BJ (cell line): ENCODE measurements at regions of chr16 and their contacts with region 1.

Region 1: DNA sequence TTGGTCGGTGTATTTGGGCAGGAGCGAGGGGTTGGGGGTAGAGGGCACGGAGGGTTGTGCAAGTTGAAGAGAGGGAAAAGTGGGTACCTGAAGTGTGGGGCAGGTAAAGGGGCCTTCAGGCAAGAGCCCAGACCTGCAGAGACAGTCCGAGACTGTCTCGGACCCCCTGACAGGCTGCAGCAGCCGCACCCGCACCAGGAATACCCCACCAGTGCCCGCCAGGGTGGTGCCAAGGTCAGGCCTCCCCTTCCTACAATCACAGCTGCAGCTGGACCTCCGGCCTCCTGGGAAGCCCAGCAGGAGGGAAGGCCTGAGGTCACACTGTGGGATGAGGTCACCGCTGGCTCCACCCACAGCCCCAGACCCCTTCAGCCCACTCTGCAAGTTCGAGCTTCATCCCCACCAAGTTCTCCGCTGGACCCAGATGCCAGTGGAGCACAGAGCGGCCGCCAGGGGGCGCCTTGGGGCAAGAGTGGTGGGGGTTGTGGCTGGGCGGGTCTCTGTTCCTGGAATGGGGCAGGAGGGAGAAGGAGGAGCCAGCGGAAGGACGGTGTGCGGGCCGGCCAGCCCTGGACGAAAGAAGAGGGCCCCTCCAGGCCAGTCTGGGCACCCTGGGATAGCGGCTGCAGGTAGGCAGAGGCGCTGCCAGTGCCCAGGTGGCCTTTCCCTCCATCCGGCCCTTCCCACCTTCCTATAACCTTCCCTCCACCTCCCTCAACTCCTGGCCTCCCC is at the start of gene HSD3B7:
- DNase-seq: no peak
- H3K4me3 ChIP-seq: peak within 1 kb of the TSS; percentile 44
- H3K27me3 ChIP-seq: no peaks in the 10 kb centered on the region
- CTCF ChIP-seq: peak; percentile 97
- polyA plus RNA-seq, gene HSD3B7: 15.4 and 25.0 TPM in 2 replicates

Region 2: GRCh38 chr16:30997887-30998711 is 13.3 kb after region 1 on chr16:
- CTCF ChIA-PET with region 1: interaction called, 16 read pairs
- POLR2A ChIA-PET with region 1: no interaction called
- DNase-seq: peak; percentile 47
- H3K4me3 ChIP-seq: peak overlapping the region; percentile 47
- H3K27me3 ChIP-seq: no peaks in the 10 kb centered on the region
- CTCF ChIP-seq: no peak

Region 3: DNA sequence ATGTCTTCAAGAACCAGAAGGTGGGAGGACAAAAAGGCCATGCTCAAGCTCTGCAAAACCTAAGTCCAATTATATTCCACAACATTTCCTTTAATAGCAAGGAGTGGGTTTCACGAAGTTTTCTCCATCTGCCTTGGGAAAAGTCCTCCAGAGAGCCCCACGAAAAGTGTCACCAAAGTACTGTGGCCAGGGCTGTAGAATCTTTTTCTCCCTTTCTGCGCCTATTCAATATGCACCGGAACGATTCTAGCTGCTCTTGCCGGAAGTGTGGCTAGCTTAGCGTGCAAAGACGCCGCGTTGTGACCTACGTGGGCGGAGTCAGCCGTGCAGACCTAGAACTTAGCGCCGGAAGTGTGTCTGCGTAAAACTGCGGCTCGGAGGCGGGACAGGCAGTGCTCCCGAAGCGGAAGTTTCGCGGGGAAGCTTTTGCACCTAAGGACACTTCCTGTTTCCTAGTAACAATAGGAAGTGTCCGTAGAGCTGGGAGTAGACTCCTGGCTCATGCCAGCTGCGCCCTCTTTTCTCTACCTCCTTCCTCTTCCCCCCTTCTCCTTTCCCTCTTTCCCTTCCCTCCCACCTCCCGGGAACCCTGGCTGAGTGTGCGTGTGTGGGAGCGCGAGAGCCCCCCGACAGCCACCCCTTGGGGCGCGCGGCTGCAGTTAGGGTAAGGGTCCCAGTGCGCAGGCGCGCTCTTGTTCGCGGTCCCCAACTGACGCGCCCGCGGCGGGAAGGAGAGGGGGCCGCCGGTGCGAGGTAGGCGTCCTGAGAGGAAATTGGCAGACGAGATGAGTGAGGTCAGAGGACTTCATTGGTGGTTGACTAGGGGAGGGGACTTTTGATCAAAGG is 89.4 kb after region 1 on chr16 and contains the starts of genes ZNF646 and ZNF668:
- CTCF ChIA-PET with region 1: interaction called, 11 read pairs
- POLR2A ChIA-PET with region 1: interaction called, 3 read pairs
- DNase-seq: peak; percentile 94
- H3K4me3 ChIP-seq: peak within 1 kb of the TSS; percentile 81
- H3K27me3 ChIP-seq: no peaks in the 10 kb centered on the region
- CTCF ChIP-seq: no peak
- polyA plus RNA-seq, gene ZNF646: 3.3 and 4.2 TPM in 2 replicates
- polyA plus RNA-seq, gene ZNF668: 10.2 and 16.3 TPM in 2 replicates

Region 4: GRCh38 chr16:31094424-31095120 is 109.7 kb after region 1 on chr16 and contains the start of gene VKORC1:
- CTCF ChIA-PET with region 1: interaction called, 54 read pairs
- POLR2A ChIA-PET with region 1: no interaction called
- DNase-seq: peak; percentile 88
- H3K4me3 ChIP-seq: peak within 1 kb of the TSS; percentile 93
- H3K27me3 ChIP-seq: no peaks in the 10 kb centered on the region
- CTCF ChIP-seq: no peak
- polyA plus RNA-seq, gene VKORC1: 416 and 515 TPM in 2 replicates

Region 5: GRCh38 chr16:31441956-31442355 is 457.1 kb after region 1 on chr16:
- CTCF ChIA-PET with region 1: interaction called, 26 read pairs
- POLR2A ChIA-PET with region 1: no interaction called
- DNase-seq: no peak
- H3K4me3 ChIP-seq: peak overlapping the region; percentile 53
- H3K27me3 ChIP-seq: no peaks in the 10 kb centered on the region; the same call in 1 of the 2 replicates
- CTCF ChIP-seq: no peak